Mammary epithelial cell (primary cell): ENCODE measurements at regions of chr12 and their contacts with region 1.

Region 1: GRCh38 chr12:56315622-56316473 is at the start of gene CNPY2:
- DNase-seq: peak; percentile 99
- H3K4me3 ChIP-seq: peak within 1 kb of the TSS; percentile 94 to 96 (median 95)
- H3K27ac ChIP-seq: peak within 1 kb of the TSS; percentile 89
- H3K4me1 ChIP-seq: peaks cover 17% of the 10 kb centered on the region
- H3K27me3 ChIP-seq: no peaks in the 10 kb centered on the region
- CTCF ChIP-seq: peak in 1 of 2 donors; percentile 18
- total RNA-seq, gene CNPY2: 49.3 to 114 TPM

Region 2: DNA sequence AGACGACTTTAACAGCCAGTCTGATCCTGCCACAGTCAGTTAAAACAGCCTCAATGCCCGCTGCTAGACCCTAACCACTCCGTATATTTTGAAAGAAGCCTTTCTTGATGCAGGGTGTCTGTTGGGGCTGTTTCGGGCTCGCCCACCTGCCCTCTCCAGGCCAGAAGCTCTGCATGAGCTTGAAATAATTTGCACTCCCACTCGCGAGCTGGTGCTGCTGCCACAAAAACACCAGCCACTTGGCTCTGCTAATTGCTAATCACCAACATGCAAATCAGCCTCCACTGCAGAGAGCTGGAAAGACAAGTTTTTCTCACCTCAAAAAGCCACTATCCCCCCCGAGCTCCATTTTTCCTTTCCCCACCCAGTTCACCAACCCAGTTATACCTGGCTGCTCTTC is 298.8 kb after region 1 on chr12:
- CTCF ChIA-PET with region 1: no interaction called
- dilution Hi-C with region 1: loop called (anchors 5 kb)
- in situ Hi-C with region 1: no loop called
- intact Hi-C with region 1: no loop called
- DNase-seq: no peak
- H3K4me3 ChIP-seq: no peak overlapping the region
- H3K27ac ChIP-seq: no peak overlapping the region
- H3K4me1 ChIP-seq: no peaks in the 10 kb centered on the region
- H3K27me3 ChIP-seq: no peaks in the 10 kb centered on the region
- CTCF ChIP-seq: no peak